Aorta (tissue), 5 donors: ENCODE measurements at regions of chr15 and their contacts with region 1.

Region 1: DNA sequence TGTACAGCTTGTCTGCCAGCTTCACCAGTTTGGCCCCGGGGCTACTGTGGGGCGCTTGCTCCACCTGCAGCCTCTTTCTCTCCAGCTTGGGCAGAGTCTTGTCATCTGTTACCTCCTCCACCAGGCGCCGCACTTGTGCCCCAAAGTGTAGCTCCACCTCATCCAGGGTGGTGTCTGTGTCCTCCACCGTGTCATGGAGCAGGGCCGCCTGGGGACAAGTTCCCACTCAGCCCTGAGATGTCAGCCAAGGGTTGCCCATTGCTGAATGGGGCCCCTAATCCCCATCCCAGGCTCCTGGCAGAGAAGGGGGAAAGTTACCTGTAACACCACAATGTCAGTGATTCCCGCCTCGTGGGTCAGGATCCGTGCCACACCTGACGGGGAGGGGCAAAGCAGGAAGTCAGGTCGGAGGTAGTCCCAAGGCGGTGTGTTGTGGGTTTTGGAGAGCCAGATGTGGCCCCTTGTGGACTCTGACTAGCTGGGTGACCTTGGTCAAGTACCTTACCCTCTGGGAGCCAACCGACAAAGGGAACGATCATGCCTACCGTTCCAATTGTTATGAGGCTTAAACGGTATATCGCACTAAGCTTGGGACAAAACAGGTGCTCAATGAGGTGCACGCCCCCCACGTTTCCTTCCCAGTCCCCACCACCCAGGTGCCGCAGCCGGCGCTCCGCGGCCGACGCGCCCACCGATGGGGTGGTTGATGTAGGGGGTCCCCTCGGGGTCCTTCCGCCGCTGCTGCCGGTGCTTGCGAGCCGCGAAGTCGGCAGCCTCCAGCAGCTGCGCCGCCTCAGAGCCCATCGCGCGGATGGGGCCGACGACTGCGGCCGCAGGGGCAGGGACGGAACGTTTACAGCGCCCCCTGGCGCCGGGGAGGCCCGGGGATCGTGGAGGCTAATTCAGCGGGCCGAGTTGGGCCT is at the start of gene HDDC3:
- DNase-seq: peak; percentile 94 to 98
- ATAC-seq: peak; percentile 83
- H3K4me3 ChIP-seq: peak within 1 kb of the TSS; percentile 42 to 60
- H3K27ac ChIP-seq: peak within 1 kb of the TSS in 1 of 2 donors; percentile 55
- H3K4me1 ChIP-seq: peaks cover 0 to 6% of the 10 kb centered on the region in 2 donors
- H3K27me3 ChIP-seq: no peaks in the 10 kb centered on the region
- total RNA-seq, gene HDDC3: 7.3 to 7.7 TPM

Region 2: DNA sequence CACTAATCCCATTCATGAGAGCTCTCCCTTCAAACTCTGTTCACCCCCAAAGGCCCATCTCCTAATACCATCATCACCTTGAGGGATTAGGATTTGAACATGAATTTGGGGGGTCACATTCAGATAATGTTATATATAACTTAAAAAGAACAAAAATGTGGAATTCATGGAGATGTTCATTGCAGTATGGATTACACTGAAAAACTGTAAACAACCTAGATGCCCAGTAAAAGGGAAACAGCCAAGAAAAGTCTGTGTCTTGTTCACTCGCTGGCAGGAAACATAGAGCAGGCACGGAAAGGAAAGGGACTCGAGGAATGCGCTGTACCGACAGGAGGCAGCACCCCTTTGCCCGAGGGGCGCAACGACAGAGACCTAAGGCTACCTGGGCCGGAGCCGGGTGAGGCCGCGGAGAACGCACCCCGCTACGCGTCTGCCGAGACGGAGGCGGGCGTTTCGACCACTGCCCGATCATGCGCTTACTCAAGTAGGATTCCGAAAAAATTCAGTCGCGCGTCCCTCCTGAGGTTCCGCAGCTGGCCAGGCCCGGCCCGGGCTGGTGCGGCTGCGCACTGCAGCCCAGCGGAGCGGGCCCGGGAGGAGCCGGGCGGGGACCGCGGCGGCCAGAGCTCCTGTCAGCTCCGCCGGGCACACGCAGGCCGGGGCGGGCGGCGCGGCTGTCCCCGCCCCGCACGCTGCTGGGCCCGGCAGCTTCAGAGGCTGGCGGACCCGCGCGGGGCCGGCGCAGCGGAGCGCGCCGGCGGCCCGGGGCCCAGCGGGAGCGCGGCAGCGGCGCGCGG is 29.8 kb before region 1 on chr15:
- intact Hi-C with region 1: loop called (anchors 1 to 2 kb)
- DNase-seq: peak; percentile 84 to 92
- ATAC-seq: peak; percentile 93
- H3K4me3 ChIP-seq: peak overlapping the region; percentile 77 to 90
- H3K27ac ChIP-seq: peak overlapping the region; percentile 79 to 97
- H3K4me1 ChIP-seq: no peaks in the 10 kb centered on the region
- H3K27me3 ChIP-seq: no peaks in the 10 kb centered on the region

Region 3: GRCh38 chr15:91329914-91330313 is 397.9 kb after region 1 on chr15:
- intact Hi-C with region 1: no loop called
- DNase-seq: no peak
- ATAC-seq: no peak
- H3K4me3 ChIP-seq: no peak overlapping the region
- H3K27ac ChIP-seq: no peak overlapping the region
- H3K4me1 ChIP-seq: no peaks in the 10 kb centered on the region
- H3K27me3 ChIP-seq: no peaks in the 10 kb centered on the region